Dorsolateral prefrontal cortex (tissue), 120 donors: ENCODE measurements at regions of chr1 and their contacts with region 1.

Region 1: DNA sequence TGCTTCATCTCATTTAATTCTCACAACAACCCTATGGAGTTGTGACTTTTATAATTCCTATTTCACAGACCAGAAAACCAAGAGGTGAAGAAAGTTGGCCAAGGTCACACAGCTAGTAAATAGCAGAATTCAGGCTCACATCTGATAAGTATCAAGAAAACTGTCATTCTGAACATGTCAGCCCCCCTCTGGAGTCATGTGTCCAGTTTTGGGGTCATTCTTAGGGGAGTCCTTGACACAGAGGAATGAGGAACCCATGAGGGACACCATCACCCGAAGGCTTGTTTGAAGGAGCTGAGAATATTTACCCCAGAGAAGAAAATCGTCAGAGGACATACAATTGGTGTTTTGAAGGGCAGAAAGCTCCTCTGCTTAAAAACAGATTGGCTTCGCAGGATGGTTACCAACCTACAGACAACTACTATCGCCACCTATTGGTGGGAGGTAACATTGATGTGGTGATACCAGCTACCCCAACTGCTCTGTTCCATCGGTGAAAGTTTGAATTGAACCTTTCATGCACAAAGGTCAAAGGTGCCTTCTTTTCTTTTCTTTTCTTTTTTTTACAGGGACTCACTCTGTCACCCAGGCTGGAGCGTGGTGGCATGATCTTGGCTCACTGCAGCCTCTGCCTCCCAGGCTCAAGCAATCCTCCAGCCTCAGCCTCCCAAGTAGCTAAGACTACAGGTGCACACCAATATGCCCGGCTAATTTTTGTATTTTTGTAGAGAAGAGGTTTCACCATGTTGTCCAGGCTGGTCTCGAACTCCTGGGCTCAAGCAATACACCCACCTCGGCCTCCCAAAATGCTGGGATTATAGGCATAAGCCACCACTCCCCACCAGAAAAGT is 31.3 kb downstream of the NCMAP start:
- DNase-seq: peak in 1 of 10 donors; percentile 29
- H3K4me3 ChIP-seq: no peak overlapping the region
- H3K27ac ChIP-seq: no peak overlapping the region
- H3K27me3 ChIP-seq: peaks cover 0 to 4% (median 0%) of the 10 kb centered on the region in 45 donors
- CTCF ChIP-seq: peak; percentile 31 to 81 (median 70)

Region 2: DNA sequence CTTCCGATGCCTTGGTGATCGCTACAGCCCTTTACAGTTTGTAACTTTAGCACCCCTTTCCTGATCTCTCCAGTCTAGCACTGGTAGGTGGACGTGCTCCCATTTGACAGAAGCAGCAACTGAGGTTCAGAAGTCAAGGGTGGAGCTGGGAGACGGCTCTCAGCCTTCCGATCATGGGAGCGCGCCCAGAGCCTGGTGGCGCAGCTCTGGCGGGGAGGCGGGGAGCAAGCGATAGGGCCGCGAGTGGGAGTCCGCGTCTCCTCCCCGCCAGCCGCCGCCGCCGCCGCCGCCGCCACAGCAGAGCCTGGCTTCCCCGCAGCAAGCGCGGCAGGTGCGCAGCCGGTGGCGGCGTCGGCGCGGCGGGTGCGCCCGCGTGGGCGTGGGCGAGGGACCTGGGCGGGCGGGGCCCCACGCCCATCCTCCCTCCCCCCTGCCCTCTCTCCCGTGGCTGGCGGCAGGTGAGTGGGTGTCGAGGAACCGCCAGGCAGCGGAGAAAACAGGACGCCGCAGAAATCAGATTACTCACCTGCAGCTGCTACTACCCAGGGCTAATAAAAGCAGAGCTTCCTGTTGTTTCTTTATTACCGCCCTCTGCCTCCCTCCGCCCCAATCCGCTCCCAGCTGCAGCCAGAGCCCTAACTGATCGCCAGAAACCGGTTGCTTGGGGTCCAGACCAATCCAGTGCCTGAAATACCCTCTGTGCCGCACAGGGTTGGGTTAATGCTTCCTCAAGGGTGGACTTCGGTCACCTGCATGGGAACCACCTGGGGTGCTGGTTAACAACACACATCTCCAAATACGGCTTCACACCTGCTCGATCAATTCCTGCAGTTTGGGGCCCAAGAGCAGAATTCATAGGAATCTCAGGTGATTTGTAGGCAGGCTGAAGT is 967.7 kb before region 1 on chr1:
- intact Hi-C with region 1: no loop called
- DNase-seq: peak in 1 of 10 donors; percentile 30
- H3K4me3 ChIP-seq: peak overlapping the region in 54 of 59 donors; percentile 10 to 61 (median 40)
- H3K27ac ChIP-seq: no peak overlapping the region
- H3K27me3 ChIP-seq: peaks cover 0 to 15% (median 0%) of the 10 kb centered on the region in 45 donors
- CTCF ChIP-seq: no peak

Region 3: DNA sequence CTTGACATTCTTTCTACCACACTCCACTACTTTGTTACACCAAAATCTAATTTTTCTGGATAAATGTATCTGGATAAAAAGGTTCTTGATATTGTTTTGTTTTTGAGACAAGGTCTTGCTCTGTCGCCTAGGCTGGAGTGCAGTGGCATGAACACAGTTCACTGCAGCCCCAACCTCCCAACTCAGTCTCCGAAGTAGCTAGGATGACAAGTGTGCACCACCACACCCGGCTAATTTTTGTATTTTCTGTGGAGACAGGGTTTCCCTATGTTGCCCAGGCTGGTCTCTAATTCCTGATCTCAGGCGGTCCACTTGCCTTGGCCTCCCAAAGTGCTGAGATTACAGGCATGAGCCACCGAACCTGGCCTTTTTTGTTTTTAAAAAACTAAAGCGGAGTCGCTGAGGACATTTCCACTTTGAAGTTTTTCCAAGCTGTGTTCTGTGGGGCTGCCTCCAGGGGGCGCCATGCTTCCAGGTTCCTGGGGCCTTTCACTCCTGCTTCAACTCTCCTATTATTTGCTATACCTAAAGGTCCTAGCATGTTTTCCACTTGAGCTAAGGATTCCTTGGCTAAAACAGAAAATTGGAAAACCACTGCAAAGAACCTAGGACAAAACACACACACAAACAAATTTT is 45.4 kb before region 1 on chr1:
- intact Hi-C with region 1: loop called in 1 of 2 experiments (anchors 5 kb)
- DNase-seq: peak in 2 of 10 donors; percentile 35 to 51
- H3K4me3 ChIP-seq: no peak overlapping the region
- H3K27ac ChIP-seq: no peak overlapping the region
- H3K27me3 ChIP-seq: peaks cover 0 to 7% (median 0%) of the 10 kb centered on the region in 45 donors
- CTCF ChIP-seq: peak; percentile 42 to 88 (median 68)